ENCODE measurements at regions of chr9 and their contacts with region 1.

Region 1: GRCh38 chr9:98998441-98999151 is 54.9 kb downstream of the COL15A1 start:
- DNase-seq: peak; percentile 89 to 96
- ATAC-seq: peak; percentile 93
- H3K4me3 ChIP-seq: no peak overlapping the region
- H3K27ac ChIP-seq: no peak overlapping the region
- H3K4me1 ChIP-seq: peaks cover 0 to 4% of the 10 kb centered on the region in 2 donors
- H3K27me3 ChIP-seq: no peaks in the 10 kb centered on the region

Region 2: DNA sequence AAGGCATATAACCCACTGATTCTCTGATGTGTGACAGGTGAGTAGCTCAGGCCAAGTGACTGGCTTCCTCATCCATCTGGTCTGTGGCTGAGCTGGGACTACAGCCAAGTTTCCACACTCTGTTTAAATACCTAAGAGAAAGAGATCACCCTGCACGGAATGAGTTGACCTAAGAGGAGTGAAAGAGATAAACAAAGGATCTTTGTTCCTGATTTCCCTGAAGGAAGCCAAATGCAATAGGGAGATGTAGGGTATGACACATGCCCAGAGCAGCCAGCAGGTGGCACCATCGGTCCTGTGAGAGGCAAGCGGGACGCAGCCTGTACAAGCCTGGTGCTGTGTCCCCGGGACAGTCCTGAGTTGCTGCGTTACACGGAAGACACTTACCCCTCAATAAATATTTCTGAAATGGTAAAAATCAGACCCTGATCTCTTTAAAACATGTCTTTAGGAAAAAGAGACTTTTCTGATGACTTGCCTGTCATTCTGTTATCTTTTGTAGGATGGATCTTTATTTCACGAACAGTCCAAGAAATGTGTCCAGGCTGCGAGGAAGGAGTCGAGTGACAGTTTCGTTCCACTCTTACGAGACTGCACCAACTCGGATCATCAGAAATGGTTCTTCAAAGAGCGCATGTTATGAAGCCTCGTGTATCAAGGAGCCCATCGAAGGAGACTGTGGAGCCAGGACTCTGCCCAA is 150.0 kb before region 1 on chr9:
- intact Hi-C with region 1: loop called in 1 of 2 experiments (anchors 2 kb)
- DNase-seq: peak; percentile 94 to 97
- ATAC-seq: peak; percentile 97
- H3K4me3 ChIP-seq: peak overlapping the region; percentile 25 to 58
- H3K27ac ChIP-seq: no peak overlapping the region
- H3K4me1 ChIP-seq: no peaks in the 10 kb centered on the region
- H3K27me3 ChIP-seq: no peaks in the 10 kb centered on the region

Region 3: GRCh38 chr9:98860871-98861293 is 137.7 kb before region 1 on chr9:
- intact Hi-C with region 1: loop called (anchors 5 kb)
- DNase-seq: peak in 1 of 2 donors; percentile 74
- ATAC-seq: peak; percentile 79
- H3K4me3 ChIP-seq: no peak overlapping the region
- H3K27ac ChIP-seq: no peak overlapping the region
- H3K4me1 ChIP-seq: no peaks in the 10 kb centered on the region
- H3K27me3 ChIP-seq: no peaks in the 10 kb centered on the region

Region 4: DNA sequence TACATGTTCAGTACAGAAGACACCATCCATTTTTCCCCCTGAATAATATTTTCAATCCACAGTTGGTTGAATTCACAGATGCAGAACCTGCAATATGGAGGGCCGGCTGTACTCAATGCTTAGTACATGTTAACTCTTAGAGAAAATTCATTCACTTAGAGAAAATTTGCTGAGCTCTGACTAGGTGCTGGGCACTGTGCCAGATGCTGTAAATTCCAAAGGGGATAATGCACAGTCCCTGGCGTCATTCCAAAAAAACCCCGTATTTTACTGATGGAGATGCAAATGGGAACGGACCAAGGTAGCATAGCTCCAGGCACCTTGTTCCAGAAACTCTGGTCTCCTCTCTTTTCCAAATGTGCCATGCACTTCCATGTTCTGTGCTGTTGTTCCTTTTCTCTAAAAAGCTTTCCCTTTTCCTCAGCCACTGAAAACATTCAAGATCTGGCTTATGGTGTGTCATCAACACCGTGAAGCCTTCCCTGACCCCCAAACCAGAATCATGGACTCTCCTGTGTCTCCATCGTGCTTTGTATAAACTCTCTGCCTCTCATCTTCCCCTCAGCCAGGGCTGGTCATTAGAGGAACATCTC is 110.6 kb before region 1 on chr9:
- intact Hi-C with region 1: no loop called
- DNase-seq: no peak
- ATAC-seq: no peak
- H3K4me3 ChIP-seq: no peak overlapping the region
- H3K27ac ChIP-seq: no peak overlapping the region
- H3K4me1 ChIP-seq: no peaks in the 10 kb centered on the region
- H3K27me3 ChIP-seq: peaks cover 0 to 2% of the 10 kb centered on the region in 2 donors

Region 5: DNA sequence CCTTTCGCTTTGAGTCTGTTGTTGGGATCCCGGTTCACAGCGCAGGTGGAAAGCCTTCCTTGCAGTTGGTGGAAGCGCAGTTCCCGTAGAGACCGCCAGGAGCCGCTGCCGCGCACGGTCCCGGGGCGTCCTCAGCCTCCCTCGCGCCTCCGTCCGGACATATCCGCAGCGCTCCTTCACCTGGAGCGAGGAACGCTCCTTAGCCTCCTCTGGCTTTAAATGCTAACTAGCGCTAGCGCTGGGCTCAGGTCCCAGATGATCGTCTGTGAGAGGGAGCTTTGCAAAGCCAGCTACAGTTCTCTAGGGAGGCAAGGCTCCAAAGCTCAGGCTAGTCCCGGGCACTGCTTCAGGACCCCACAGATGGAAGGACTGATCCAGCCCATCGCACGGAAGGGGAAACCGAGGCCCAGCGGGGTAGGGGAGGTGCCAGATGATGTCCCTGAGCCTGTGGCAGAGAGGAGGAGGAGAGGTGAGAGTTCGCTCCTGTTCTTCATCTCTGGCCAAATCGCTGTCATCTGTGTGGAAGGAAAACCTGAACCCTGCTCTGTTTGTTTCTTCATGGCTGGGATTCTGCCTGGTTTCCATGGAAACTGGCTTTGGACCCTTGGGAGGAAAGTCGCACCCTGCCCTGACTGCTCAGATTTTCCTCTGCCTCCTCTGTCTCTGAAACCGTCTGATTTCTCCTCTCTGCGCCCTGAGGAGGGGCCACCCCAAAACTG is 23.4 kb before region 1 on chr9:
- intact Hi-C with region 1: loop called in 1 of 2 experiments (anchors 1 kb)
- DNase-seq: peak; percentile 86 to 96
- ATAC-seq: peak; percentile 91
- H3K4me3 ChIP-seq: no peak overlapping the region
- H3K27ac ChIP-seq: peak overlapping the region in 1 of 2 donors; percentile 4
- H3K4me1 ChIP-seq: no peaks in the 10 kb centered on the region
- H3K27me3 ChIP-seq: no peaks in the 10 kb centered on the region

Region 6: GRCh38 chr9:99050292-99050911 is 51.8 kb after region 1 on chr9:
- intact Hi-C with region 1: no loop called
- DNase-seq: no peak
- ATAC-seq: no peak
- H3K4me3 ChIP-seq: no peak overlapping the region
- H3K27ac ChIP-seq: no peak overlapping the region
- H3K4me1 ChIP-seq: no peaks in the 10 kb centered on the region
- H3K27me3 ChIP-seq: no peaks in the 10 kb centered on the region

Region 7: DNA sequence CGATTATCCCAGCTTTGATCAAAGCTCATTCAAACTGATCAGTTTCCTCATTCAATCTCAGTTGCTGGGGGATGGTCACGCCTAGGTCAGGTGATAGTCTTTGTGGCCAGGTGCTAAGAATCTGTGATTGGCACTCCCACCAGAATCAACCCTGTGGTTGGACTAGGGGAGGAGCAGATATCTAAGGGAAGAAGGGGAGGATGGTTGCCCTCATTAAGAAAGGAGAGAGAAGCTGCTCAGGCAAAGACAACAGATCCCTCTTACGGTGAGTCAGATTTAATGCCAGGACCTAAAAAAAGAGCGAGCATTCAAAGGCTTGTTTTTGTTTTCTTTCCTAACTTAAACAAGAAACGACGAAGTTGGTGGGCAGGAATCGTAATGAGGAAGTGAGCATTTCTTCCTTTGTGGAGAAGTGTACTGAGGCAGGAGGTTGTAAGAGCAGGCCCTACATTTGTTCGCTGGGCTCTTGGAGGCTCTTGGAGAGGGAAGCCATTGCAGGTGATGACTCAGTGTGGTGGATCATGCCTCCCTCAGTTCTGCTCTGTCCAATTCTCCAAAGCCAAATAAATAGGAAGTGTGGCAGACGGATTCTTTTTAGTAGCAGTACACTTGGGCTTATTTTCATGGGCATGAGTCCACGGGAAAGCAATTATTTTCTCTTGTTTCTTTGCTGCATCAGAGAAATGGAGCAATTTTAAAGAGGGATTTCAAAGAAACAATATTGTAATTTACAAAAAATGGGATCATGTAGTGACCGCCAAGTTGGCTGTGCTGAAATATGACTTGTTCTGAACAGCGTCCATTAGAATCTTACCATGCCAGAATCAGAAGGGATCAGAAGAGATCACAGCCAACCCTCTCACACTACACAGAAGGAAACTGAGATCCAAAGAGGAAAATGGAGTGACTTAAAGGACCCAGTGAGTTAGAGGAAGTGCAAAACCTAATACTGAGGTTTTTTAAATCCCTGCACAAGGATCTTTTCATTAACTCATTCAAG is 87.7 kb after region 1 on chr9:
- intact Hi-C with region 1: no loop called
- DNase-seq: peak in 1 of 2 donors; percentile 65
- ATAC-seq: peak; percentile 88
- H3K4me3 ChIP-seq: no peak overlapping the region
- H3K27ac ChIP-seq: peak overlapping the region in 1 of 2 donors; percentile 6
- H3K4me1 ChIP-seq: peaks cover 0 to 2% of the 10 kb centered on the region in 2 donors
- H3K27me3 ChIP-seq: no peaks in the 10 kb centered on the region

Region 8: DNA sequence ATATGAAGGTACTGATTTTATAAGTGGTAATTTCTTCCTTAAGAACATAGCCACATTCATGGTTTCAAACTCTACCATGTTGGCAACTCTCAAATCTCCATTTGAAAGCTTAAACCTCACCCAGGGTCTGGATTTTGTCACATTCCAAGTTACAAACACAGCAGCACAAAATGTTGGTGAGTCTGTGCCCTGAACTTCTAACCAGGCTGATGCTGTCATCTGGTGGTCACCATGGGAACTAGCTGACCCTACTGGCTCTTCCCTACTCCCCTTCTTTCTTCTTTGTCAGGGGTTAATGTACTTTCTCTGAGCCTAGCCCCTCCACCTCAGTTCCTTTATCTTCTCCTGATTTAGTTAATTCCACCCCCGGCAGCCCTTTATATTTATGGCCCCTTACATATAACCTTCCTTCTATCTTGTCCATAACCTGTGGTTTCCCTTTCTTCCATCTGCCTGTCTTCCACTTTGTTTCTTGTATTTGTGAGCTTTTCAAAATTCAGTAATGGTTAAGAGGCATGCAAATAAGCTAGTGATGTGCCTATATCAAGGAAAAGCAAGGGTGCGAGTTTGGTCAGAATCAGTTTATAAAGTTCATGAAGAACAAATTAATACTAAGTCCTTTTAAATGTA is 142.2 kb after region 1 on chr9:
- intact Hi-C with region 1: loop called in 1 of 2 experiments (anchors 5 kb)
- DNase-seq: no peak
- ATAC-seq: peak; percentile 72
- H3K4me3 ChIP-seq: no peak overlapping the region
- H3K27ac ChIP-seq: no peak overlapping the region
- H3K4me1 ChIP-seq: no peaks in the 10 kb centered on the region
- H3K27me3 ChIP-seq: no peaks in the 10 kb centered on the region